H1 (cell line): ENCODE measurements at regions of chr11 and their contacts with region 1.

Region 1: GRCh38 chr11:124800226-124800929 is at the start of gene MSANTD2:
- DNase-seq: peak; percentile 29 to 90
- H3K4me3 ChIP-seq: peak within 1 kb of the TSS; percentile 70 to 86 (median 74)
- H3K27ac ChIP-seq: peak within 1 kb of the TSS; percentile 96
- H3K4me1 ChIP-seq: peaks cover 0 to 6% (median under 1%) of the 10 kb centered on the region in 4 experiments; a peak in 3 of 7 replicates
- H3K27me3 ChIP-seq: no peaks in the 10 kb centered on the region
- CTCF ChIP-seq: no peak
- EP300 ChIP-seq: no peak
- POLR2A ChIP-seq: peak; percentile 97 to 98
- RAD21 ChIP-seq: no peak
- total RNA-seq, gene MSANTD2: 15.9 and 17.3 TPM in 2 replicates

Region 2: DNA sequence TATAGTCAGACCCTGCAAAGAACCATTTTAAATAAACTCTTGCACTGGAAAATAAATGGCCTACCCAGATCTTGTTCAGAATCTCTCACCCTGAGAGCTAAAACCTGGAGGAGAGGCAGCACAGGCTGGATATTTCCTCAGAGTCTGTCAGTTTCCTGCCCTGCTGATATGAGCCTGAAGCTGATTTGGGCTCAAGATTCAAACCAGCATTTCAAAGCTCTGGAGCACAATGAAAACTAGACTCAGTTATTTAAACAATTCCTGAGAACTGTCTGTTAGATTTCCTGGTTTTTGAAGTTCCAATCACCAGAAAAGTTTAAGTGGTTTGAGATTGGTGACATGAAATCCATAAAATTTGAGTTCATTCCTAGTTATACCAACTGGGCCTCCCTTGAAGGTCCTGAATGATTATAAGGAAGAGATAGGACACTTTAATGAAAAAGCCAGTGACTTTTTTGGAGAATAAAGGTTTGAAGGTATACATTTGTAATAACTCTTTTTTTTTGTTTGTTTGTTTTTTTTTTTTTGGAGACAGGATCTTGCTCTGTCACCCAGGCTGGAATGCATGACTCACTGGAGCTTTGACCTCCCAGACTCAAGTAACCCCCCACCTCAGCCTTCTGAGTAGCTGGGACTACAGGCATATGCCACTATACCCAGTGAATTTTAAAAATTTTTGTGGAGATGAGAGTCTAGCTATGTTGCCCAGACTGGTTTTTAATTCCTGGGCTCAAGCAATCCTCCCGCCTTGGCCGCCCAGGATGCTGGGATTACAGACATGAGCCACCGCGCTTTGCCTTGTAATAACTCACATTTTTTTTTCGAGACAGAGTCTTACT is 30.4 kb before region 1 on chr11:
- CTCF ChIA-PET with region 1: interaction called, 111 read pairs
- POLR2A ChIA-PET with region 1: interaction called, 3 read pairs
- DNase-seq: no peak
- H3K4me3 ChIP-seq: no peak overlapping the region
- H3K27ac ChIP-seq: no peak overlapping the region
- H3K4me1 ChIP-seq: no peaks in the 10 kb centered on the region
- H3K27me3 ChIP-seq: no peaks in the 10 kb centered on the region
- CTCF ChIP-seq: no peak
- EP300 ChIP-seq: no peak
- POLR2A ChIP-seq: no peak
- RAD21 ChIP-seq: no peak

Region 3: GRCh38 chr11:124788521-124788920 is 11.9 kb before region 1 on chr11:
- CTCF ChIA-PET with region 1: interaction called, 46 read pairs
- POLR2A ChIA-PET with region 1: interaction called, 23 read pairs
- DNase-seq: no peak
- H3K4me3 ChIP-seq: no peak overlapping the region
- H3K27ac ChIP-seq: no peak overlapping the region
- H3K4me1 ChIP-seq: peaks cover 3 to 20% (median 7%) of the 10 kb centered on the region in 4 experiments; a peak in 6 of 7 replicates
- H3K27me3 ChIP-seq: no peaks in the 10 kb centered on the region
- CTCF ChIP-seq: no peak
- EP300 ChIP-seq: no peak
- POLR2A ChIP-seq: no peak
- RAD21 ChIP-seq: no peak

Region 4: GRCh38 chr11:124812876-124813275 is 12.5 kb after region 1 on chr11:
- CTCF ChIA-PET with region 1: interaction called, 17 read pairs
- POLR2A ChIA-PET with region 1: interaction called, 12 read pairs
- DNase-seq: no peak
- H3K4me3 ChIP-seq: no peak overlapping the region
- H3K27ac ChIP-seq: no peak overlapping the region
- H3K4me1 ChIP-seq: no peaks in the 10 kb centered on the region
- H3K27me3 ChIP-seq: no peaks in the 10 kb centered on the region; a peak in 1 of 7 replicates
- CTCF ChIP-seq: no peak
- EP300 ChIP-seq: no peak
- POLR2A ChIP-seq: no peak
- RAD21 ChIP-seq: no peak

Region 5: DNA sequence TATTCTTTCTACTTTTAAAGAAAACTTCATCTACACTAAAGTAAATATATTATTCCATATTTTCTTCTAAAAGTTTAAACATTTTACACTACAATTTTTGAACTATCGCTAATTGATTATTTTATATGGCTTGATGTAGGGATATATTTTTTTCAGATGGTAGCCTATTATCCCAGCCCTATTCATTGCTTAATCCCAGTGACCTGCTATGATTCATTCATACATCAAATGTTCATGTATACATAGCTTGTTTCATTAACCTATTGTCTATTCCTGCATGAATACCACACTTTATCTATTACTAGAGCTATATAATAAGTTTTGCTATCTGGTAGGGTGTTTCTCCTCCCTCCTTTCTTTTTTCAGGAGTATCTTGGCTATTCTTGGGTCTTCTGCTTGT is 102.2 kb after region 1 on chr11:
- CTCF ChIA-PET with region 1: no interaction called
- POLR2A ChIA-PET with region 1: no interaction called
- DNase-seq: no peak
- H3K4me3 ChIP-seq: no peak overlapping the region
- H3K27ac ChIP-seq: no peak overlapping the region
- H3K4me1 ChIP-seq: peaks cover 0 to 2% (median 1%) of the 10 kb centered on the region in 4 experiments; a peak in 3 of 7 replicates
- H3K27me3 ChIP-seq: peaks cover 0 to 6% (median 0%) of the 10 kb centered on the region in 4 experiments; a peak in 3 of 7 replicates
- CTCF ChIP-seq: no peak
- EP300 ChIP-seq: no peak
- POLR2A ChIP-seq: no peak
- RAD21 ChIP-seq: no peak